Activated CD8-positive, alpha-beta memory T cell treated with anti-CD3 and anti-CD28 coated beads, Interleukin-2, amount 10 ng/mL, durations not matched to agents 7 days and 5 days (primary cell): ENCODE measurements at regions of chr9 and their contacts with region 1.

Region 1: GRCh38 chr9:21395778-21396717 is 10.8 kb upstream of the IFNA2 start:
- DNase-seq: peak; percentile 67
- ATAC-seq: peak; percentile 81
- H3K4me3 Mint-ChIP-seq: peak overlapping the region; percentile 70
- H3K27ac Mint-ChIP-seq: no peak overlapping the region
- H3K4me1 Mint-ChIP-seq: peaks cover 5% of the 10 kb centered on the region
- H3K27me3 Mint-ChIP-seq: peaks cover 77% of the 10 kb centered on the region

Region 2: GRCh38 chr9:21317956-21318923 is 77.8 kb before region 1 on chr9:
- CTCF ChIA-PET with region 1: interaction called, 25 read pairs
- DNase-seq: no peak
- ATAC-seq: peak; percentile 69
- H3K4me3 Mint-ChIP-seq: no peak overlapping the region
- H3K27ac Mint-ChIP-seq: no peak overlapping the region
- H3K4me1 Mint-ChIP-seq: peaks cover 2% of the 10 kb centered on the region
- H3K27me3 Mint-ChIP-seq: peaks cover 15% of the 10 kb centered on the region

Region 3: GRCh38 chr9:21326526-21327139 is 69.4 kb before region 1 on chr9:
- CTCF ChIA-PET with region 1: interaction called, 31 read pairs
- DNase-seq: no peak
- ATAC-seq: peak; percentile 89
- H3K4me3 Mint-ChIP-seq: no peak overlapping the region
- H3K27ac Mint-ChIP-seq: no peak overlapping the region
- H3K4me1 Mint-ChIP-seq: peaks cover 33% of the 10 kb centered on the region
- H3K27me3 Mint-ChIP-seq: no peaks in the 10 kb centered on the region

Region 4: GRCh38 chr9:21334701-21335632 is 61.1 kb before region 1 on chr9 and contains the start of gene KLHL9:
- CTCF ChIA-PET with region 1: interaction called, 30 read pairs
- DNase-seq: peak; percentile 91
- ATAC-seq: peak; percentile 96
- H3K4me3 Mint-ChIP-seq: peak within 1 kb of the TSS; percentile 96
- H3K27ac Mint-ChIP-seq: peak within 1 kb of the TSS; percentile 90
- H3K4me1 Mint-ChIP-seq: peaks cover 47% of the 10 kb centered on the region
- H3K27me3 Mint-ChIP-seq: peaks cover 4% of the 10 kb centered on the region
- total RNA-seq, gene KLHL9: 15.4 to 21.2 TPM

Region 5: GRCh38 chr9:21381448-21382339 is 14.4 kb before region 1 on chr9:
- CTCF ChIA-PET with region 1: interaction called, 16 read pairs
- DNase-seq: no peak
- ATAC-seq: peak; percentile 88
- H3K4me3 Mint-ChIP-seq: peak overlapping the region; percentile 45
- H3K27ac Mint-ChIP-seq: peak overlapping the region; percentile 11
- H3K4me1 Mint-ChIP-seq: peaks cover 22% of the 10 kb centered on the region
- H3K27me3 Mint-ChIP-seq: peaks cover 45% of the 10 kb centered on the region

Region 6: GRCh38 chr9:21408817-21409216 is 12.8 kb after region 1 on chr9 and contains the start of gene IFNA8:
- CTCF ChIA-PET with region 1: interaction called, 18 read pairs
- DNase-seq: no peak
- ATAC-seq: no peak
- H3K4me3 Mint-ChIP-seq: no peak within 1 kb of the TSS
- H3K27ac Mint-ChIP-seq: no peak within 1 kb of the TSS
- H3K4me1 Mint-ChIP-seq: peaks cover 2% of the 10 kb centered on the region
- H3K27me3 Mint-ChIP-seq: peaks cover 46% of the 10 kb centered on the region
- total RNA-seq, gene IFNA8: not detected

Region 7: DNA sequence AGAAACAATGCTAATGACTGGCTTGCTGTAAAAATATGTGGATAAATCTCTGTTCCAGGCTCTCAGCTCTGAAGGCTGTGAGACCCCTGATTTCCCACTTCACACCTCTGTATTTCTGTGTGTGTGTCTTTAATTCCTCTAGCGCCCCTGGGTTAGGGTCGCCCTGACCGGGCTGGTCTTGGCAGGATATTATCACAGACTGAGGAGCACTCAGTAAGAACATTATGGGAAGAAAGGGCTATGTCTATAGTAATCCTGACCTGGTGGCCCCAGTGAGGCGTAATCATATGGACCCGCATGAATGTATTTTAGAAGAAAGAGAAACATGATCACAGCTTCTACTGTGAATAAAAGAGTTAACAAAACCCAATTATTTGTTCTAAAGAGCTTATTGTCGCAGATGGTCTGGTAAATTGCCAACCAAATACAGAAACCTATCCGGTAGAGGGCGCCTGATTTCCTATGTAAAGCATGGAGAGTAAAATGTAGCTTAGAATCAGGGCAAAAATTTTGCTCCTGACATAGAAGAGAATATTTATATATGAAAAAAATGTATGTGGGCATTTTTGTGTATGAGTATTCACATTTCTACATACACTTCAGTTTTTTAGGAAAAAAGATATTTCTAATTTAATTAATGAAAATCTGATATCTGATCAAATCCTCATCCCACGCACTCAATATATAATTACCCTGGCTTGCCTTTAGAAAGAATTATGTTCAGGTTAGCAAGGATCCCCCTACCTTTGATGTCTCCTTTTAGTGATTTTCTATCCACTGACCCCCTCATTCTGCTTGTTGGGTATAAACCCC is 38.4 kb after region 1 on chr9:
- CTCF ChIA-PET with region 1: interaction called, 11 read pairs
- DNase-seq: no peak
- ATAC-seq: no peak
- H3K4me3 Mint-ChIP-seq: no peak overlapping the region
- H3K27ac Mint-ChIP-seq: no peak overlapping the region
- H3K4me1 Mint-ChIP-seq: peaks cover 2% of the 10 kb centered on the region
- H3K27me3 Mint-ChIP-seq: peaks cover 34% of the 10 kb centered on the region

Region 8: DNA sequence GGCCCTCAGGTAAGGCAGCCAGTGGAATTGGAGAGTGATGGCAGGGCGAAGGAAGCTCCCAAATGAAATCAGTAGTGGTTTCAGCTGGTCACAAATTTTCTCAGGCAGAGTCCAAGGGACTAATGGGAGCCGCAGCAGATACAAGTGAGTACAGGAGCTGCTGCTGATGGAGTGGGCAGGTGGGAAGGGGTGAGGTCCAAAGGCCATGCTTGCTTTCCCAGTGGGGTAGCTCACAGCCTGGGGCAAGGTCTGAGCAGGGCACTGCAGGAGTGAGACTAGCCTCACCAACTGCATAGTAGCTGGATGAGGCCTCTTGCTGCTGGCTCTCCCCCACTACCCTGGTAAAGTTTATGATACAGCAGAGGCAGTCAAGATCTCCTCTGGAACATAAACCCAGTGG is 444.6 kb after region 1 on chr9:
- CTCF ChIA-PET with region 1: no interaction called
- DNase-seq: no peak
- ATAC-seq: no peak
- H3K4me3 Mint-ChIP-seq: no peak overlapping the region
- H3K27ac Mint-ChIP-seq: no peak overlapping the region
- H3K4me1 Mint-ChIP-seq: peaks cover 2% of the 10 kb centered on the region
- H3K27me3 Mint-ChIP-seq: no peaks in the 10 kb centered on the region